Ovary (tissue), 10 donors: ENCODE measurements at regions of chr1 and their contacts with region 1.

Region 1: DNA sequence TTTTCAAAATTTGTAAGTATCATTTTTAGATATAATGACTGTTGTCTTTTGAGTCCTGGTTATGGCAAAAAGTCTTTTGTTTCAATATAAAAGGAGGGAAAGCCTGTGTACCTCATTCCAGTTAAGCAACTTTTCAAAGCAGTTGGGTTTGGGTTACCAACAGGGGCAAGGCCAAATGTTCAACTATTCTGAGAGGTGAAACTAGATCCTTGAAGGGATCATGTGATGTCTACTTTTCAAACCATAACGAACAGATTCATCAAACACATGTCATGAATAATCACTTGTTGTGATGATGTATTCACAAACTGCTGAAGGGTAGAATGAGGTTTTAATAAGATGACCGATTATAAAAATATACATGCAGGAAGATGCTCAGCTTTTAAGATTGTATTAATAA is 171.3 kb downstream of the HHAT start:
- DNase-seq: no peak
- H3K4me3 ChIP-seq: no peak overlapping the region
- H3K27ac ChIP-seq: no peak overlapping the region
- H3K4me1 ChIP-seq: no peaks in the 10 kb centered on the region
- H3K27me3 ChIP-seq: no peaks in the 10 kb centered on the region
- CTCF ChIP-seq: no peak
- EP300 ChIP-seq: no peak
- POLR2A ChIP-seq: no peak

Region 2: DNA sequence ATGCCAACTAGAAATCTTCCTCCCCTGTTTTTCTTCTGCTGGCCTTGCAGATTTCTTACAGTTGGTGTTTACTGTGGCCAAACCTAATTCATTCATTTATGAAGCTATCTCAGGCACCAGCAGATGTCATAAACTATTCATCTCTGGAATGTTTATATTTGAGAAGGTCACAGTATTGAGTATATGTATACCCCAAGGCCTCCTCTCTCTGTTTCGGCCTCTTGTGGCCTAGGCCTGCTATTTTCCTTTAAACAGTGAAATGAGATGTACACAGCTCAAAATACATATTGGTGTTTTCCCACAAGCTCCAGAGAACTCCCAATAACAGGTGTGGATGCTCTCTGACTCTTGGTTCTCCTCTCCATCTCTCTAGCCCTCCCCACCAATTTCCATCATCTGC is 1437.1 kb before region 1 on chr1:
- intact Hi-C with region 1: loop called in 1 of 4 experiments (anchors 5 kb)
- DNase-seq: no peak
- H3K4me3 ChIP-seq: no peak overlapping the region
- H3K27ac ChIP-seq: no peak overlapping the region
- H3K4me1 ChIP-seq: no peaks in the 10 kb centered on the region
- H3K27me3 ChIP-seq: no peaks in the 10 kb centered on the region
- CTCF ChIP-seq: no peak
- EP300 ChIP-seq: no peak
- POLR2A ChIP-seq: no peak

Region 3: GRCh38 chr1:210754878-210755665 is 255.1 kb after region 1 on chr1:
- intact Hi-C with region 1: no loop called
- DNase-seq: no peak
- H3K4me3 ChIP-seq: no peak overlapping the region
- H3K27ac ChIP-seq: no peak overlapping the region
- H3K4me1 ChIP-seq: no peaks in the 10 kb centered on the region
- H3K27me3 ChIP-seq: no peaks in the 10 kb centered on the region
- CTCF ChIP-seq: no peak
- EP300 ChIP-seq: no peak
- POLR2A ChIP-seq: no peak